Activated CD4-positive, alpha-beta T cell treated with anti-CD3 and anti-CD28 coated beads, Interleukin-2, amount 10 ng/mL, durations not matched to agents 7 days and 5 days (primary cell): ENCODE measurements at regions of chr2 and their contacts with region 1.

Region 1: DNA sequence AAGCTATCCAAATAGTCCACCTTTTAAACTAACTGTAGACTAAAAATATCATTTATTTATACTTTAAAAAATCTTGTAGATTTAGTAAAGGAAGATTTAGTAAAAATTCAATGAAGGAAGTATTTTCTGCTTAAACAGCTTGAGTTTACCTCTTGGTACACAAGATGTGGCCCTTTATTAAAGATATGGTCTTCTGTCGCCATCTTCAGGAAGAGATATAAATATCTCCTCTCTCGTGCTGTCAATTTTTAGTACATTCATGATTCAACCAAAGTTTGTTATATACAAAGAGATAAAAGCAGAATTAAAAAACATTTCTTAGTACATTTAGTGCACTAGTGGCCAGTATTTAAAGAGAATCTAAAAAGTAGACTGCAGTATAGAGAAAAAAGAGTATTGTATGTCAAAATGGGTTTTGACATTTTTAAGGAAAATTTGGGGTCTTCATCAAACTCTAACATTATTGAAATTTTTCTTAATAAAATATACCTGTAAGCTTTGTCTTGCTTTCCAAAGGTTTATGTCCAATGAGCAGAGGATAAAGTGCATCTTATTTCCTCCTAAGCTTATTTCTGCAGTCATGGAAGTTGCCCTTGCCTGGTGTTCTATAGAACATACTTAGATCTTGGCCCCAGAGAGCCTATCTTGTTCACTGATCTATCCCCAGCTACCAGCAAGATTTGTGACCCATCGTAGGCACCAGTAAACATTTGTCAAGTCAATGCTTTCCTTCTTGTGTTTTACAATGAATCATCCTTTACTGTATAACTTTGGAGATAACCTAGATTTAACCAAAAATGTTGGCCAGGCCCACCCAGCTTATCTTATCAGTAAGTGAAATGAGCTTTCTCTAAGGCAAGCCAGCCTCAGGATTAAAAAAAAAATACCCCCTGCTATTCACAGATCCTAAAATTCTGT is 18.5 kb upstream of the EML6 start:
- DNase-seq: no peak
- H3K4me3 Mint-ChIP-seq: no peak overlapping the region
- H3K27ac Mint-ChIP-seq: no peak overlapping the region
- H3K4me1 Mint-ChIP-seq: peaks cover 13% of the 10 kb centered on the region
- H3K27me3 Mint-ChIP-seq: peaks cover 47% of the 10 kb centered on the region

Region 2: GRCh38 chr2:54206596-54206995 is 498.4 kb before region 1 on chr2:
- CTCF ChIA-PET with region 1: no interaction called
- POLR2A ChIA-PET with region 1: no interaction called
- DNase-seq: no peak
- H3K4me3 Mint-ChIP-seq: no peak overlapping the region
- H3K27ac Mint-ChIP-seq: no peak overlapping the region
- H3K4me1 Mint-ChIP-seq: no peaks in the 10 kb centered on the region
- H3K27me3 Mint-ChIP-seq: no peaks in the 10 kb centered on the region

Region 3: DNA sequence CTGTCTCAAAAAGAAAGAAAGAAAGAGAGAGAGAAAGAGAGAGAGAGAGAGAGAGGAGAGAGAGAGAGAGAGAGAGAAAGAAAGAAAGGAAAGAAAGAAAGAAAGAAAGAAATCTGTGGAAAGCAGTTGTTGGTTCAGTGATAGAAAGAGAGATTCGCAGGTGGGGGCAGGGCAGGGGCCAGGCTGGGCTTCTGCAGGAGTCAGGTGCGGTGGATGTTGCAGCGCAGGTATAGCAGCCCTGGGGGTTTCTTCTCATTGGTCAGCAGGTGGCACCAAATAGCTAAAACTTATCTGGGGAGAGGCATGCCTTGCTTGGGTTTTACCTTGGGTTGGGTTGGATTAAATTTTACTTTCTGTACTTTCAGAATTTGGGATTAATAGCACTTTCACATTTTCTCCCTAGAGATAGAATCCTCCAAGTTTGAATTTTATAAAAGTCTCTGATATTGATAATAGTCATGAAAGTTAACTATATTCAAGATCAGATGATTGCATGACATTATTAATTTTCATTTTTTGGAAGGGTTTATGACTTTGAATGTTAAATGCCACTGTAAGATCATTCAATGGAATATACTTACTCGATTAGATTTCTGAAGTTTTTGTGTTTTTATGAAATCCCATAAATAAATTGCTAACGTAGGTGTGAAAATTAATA is 182.2 kb before region 1 on chr2:
- CTCF ChIA-PET with region 1: interaction called, 13 read pairs
- POLR2A ChIA-PET with region 1: no interaction called
- DNase-seq: peak; percentile 81
- H3K4me3 Mint-ChIP-seq: no peak overlapping the region
- H3K27ac Mint-ChIP-seq: peak overlapping the region; percentile 75
- H3K4me1 Mint-ChIP-seq: peaks cover 20% of the 10 kb centered on the region
- H3K27me3 Mint-ChIP-seq: peaks cover 8% of the 10 kb centered on the region

Region 4: GRCh38 chr2:54665436-54665856 is 39.5 kb before region 1 on chr2:
- CTCF ChIA-PET with region 1: interaction called, 26 read pairs
- POLR2A ChIA-PET with region 1: no interaction called
- DNase-seq: peak; percentile 61
- H3K4me3 Mint-ChIP-seq: no peak overlapping the region
- H3K27ac Mint-ChIP-seq: peak overlapping the region; percentile 61
- H3K4me1 Mint-ChIP-seq: peaks cover 16% of the 10 kb centered on the region
- H3K27me3 Mint-ChIP-seq: no peaks in the 10 kb centered on the region

Region 5: DNA sequence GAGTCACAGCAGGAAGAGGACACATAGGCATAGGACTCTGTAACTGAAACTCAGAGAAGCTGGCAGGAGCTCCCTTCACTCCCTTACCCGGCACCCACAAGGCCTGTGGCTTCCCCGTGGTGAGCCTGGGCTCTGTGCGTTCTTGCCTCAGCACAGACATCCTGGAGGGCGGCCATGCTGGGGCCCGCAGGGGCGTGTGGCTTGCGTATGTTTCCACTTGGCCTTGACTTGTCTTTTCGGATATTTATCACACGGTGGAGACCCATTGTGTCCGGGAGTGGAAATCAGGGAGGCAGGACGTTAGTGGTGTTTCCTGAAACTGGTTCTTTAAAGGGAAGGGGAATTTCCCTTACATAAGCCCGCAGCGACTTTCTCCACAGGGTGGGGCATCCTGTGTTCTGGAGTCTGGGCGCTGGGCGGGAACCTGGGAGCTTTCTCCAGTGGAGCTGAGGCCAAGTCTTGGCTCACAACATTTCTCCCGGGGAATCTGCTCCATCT is 31.4 kb before region 1 on chr2:
- CTCF ChIA-PET with region 1: interaction called, 11 read pairs
- POLR2A ChIA-PET with region 1: no interaction called
- DNase-seq: peak; percentile 52
- H3K4me3 Mint-ChIP-seq: no peak overlapping the region
- H3K27ac Mint-ChIP-seq: no peak overlapping the region
- H3K4me1 Mint-ChIP-seq: peaks cover 24% of the 10 kb centered on the region
- H3K27me3 Mint-ChIP-seq: peaks cover 25% of the 10 kb centered on the region

Region 6: DNA sequence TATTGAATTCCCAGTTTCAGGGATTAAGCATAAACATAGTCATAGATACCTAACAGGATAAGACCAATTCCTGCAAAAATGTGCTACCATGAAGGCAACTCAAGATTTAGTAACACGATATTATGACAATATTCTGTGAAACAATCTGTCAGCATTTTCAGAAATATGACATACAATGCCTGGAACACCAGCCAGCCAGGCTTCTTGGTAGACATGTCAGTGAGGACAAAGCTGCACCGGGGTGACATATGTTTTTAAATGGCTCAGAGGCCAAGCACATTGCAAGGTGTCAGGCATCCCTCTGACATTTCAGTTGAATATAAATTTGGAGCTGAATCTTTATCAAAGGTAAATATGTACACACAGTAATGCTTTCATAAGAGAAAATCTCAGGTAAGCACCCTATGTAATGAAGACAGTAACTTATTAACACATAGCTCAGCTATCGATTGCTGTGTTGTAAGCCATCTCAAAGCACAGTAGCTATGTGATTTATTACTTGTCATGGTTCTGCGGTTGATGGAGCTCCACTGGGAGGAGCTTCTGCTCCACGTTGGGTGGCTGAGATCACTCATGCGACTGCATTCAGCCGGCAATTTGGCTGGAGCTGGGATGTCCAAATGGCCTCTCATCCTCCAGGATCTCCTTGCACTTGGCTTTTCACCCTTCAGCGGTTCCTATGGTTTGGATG is 13.4 kb before region 1 on chr2:
- CTCF ChIA-PET with region 1: interaction called, 14 read pairs
- POLR2A ChIA-PET with region 1: no interaction called
- DNase-seq: no peak
- H3K4me3 Mint-ChIP-seq: no peak overlapping the region
- H3K27ac Mint-ChIP-seq: no peak overlapping the region
- H3K4me1 Mint-ChIP-seq: peaks cover 15% of the 10 kb centered on the region
- H3K27me3 Mint-ChIP-seq: peaks cover 15% of the 10 kb centered on the region

Region 7: DNA sequence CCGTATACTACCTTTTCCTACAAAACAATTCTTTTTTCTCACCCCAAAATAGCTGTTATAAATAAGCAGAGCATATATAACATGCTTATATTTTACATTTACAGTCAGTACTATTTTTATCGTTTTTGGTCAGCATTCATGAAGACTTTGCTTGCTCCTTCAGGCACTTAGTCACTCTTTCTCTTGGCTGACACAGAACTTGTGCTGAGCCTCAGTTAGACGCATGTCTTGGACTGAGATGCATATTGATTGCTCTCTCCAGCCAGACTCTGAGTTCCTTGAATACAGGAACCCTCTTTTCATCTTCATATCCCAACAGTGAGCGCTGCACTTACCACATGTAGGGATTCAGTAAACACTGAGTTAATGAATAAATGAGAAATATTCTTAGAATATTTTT is 187.0 kb after region 1 on chr2:
- CTCF ChIA-PET with region 1: no interaction called
- POLR2A ChIA-PET with region 1: no interaction called
- DNase-seq: no peak
- H3K4me3 Mint-ChIP-seq: no peak overlapping the region
- H3K27ac Mint-ChIP-seq: no peak overlapping the region
- H3K4me1 Mint-ChIP-seq: no peaks in the 10 kb centered on the region
- H3K27me3 Mint-ChIP-seq: peaks cover 4% of the 10 kb centered on the region